Activated CD4-positive, alpha-beta memory T cell treated with anti-CD3 and anti-CD28 coated beads for 36 hours (primary cell): ENCODE measurements at regions of chr18 and their contacts with region 1.

Region 1: GRCh38 chr18:44715842-44716241 is 35.2 kb downstream of the SETBP1 start:
- DNase-seq: no peak
- H3K4me3 Mint-ChIP-seq: no peak overlapping the region
- H3K27ac Mint-ChIP-seq: no peak overlapping the region
- H3K4me1 Mint-ChIP-seq: peaks cover 21% of the 10 kb centered on the region
- H3K27me3 Mint-ChIP-seq: peaks cover 7% of the 10 kb centered on the region

Region 2: DNA sequence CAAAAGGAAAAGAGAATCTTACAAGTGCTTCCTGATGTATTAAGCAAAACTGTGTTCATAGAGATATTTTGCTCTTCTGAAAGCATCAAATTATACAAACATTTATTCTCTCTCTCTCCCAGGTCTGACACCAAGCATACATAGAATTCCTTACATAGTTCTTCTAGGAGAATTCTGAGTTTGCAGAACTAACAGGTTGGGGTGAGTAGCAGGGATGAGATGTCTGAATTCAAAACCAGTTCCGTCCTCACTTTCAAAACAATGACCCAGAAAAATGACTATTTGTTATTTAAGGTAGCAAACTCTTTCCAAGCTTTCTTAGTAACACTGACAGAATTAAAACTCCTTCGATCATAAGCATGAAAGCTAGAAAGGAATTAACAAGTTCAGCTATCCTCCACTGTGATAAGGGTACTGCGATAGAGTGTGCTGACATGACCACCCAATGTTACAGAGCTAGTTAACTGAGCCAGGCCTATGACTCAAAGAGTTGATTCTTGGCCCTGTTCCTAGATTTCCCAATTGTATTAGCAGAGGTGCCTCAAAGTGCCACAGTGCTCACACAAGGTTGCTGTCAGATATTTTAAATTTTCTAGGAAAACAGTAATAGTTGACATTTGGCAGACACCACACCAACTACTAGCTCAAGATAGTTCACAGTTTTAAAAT is 120.9 kb before region 1 on chr18:
- CTCF ChIA-PET with region 1: no interaction called
- POLR2A ChIA-PET with region 1: no interaction called
- intact Hi-C with region 1: no loop called
- DNase-seq: no peak
- H3K4me3 Mint-ChIP-seq: no peak overlapping the region
- H3K27ac Mint-ChIP-seq: no peak overlapping the region
- H3K4me1 Mint-ChIP-seq: peaks cover 5% of the 10 kb centered on the region
- H3K27me3 Mint-ChIP-seq: peaks cover 19% of the 10 kb centered on the region

Region 3: GRCh38 chr18:44699572-44700261 is 16.1 kb before region 1 on chr18:
- CTCF ChIA-PET with region 1: no interaction called
- POLR2A ChIA-PET with region 1: interaction called, 3 read pairs
- intact Hi-C with region 1: loop called (anchors 1 kb)
- DNase-seq: no peak
- H3K4me3 Mint-ChIP-seq: no peak overlapping the region
- H3K27ac Mint-ChIP-seq: no peak overlapping the region
- H3K4me1 Mint-ChIP-seq: peaks cover 15% of the 10 kb centered on the region
- H3K27me3 Mint-ChIP-seq: peaks cover 7% of the 10 kb centered on the region

Region 4: GRCh38 chr18:44733069-44733753 is 17.4 kb after region 1 on chr18:
- CTCF ChIA-PET with region 1: no interaction called
- POLR2A ChIA-PET with region 1: interaction called, 3 read pairs
- intact Hi-C with region 1: loop called (anchors 2 kb)
- DNase-seq: peak; percentile 54
- H3K4me3 Mint-ChIP-seq: no peak overlapping the region
- H3K27ac Mint-ChIP-seq: no peak overlapping the region
- H3K4me1 Mint-ChIP-seq: peaks cover 38% of the 10 kb centered on the region
- H3K27me3 Mint-ChIP-seq: peaks cover 4% of the 10 kb centered on the region